ENCODE measurements at regions of chr9 and their contacts with region 1.

Region 1: DNA sequence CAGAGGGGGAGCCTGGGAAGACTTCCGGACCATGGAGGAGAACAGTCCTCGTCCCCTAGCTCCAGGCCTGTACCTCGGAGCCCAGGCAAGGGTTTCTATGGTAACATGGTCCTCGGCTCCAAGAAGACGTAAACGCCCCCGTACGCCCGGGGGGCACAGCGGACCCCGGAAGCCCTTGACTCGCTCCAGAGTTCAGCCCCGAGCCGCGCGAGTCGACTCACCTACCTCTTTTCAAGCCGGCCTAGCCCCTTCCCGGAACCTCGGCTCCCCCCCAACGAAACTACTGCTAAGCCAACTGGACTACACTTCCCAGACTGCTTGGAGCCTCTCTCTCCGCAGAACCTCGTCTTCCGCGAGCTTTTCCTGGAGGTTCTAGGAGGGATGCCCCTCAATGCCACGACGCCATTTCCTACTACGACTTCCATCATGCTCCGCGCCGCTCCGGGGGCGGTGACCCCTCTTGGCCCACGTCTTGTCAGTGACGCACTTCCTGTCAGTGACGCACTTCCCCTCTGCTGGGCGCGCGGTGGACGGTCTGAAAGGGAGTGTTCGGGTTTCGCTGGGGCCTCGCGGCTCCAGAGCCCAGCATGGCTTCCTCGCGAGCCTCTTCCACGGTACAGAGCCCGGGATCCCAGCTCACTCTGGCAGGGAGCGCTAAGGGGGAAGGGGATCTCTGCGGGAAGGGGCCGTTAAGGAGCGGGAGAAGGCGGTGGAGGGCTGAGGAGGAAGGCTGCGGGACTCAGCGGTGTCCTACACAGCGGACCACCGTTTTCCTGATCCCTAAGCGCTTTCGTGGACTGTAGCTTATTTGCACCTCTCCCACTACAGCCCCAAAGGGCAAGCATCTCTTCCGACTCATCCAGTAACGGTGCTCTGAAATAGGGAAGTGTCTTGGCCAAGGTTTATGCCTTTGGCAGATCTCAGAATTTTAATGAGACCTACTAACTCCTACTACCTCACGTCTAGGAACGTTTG is at the starts of genes CDC26 and PRPF4:
- DNase-seq: peak; percentile 99
- ATAC-seq: peak; percentile 91
- H3K4me3 Mint-ChIP-seq: no peak within 1 kb of the TSS
- H3K27ac Mint-ChIP-seq: no peak within 1 kb of the TSS
- H3K4me1 Mint-ChIP-seq: peaks cover 32% of the 10 kb centered on the region
- H3K27me3 Mint-ChIP-seq: no peaks in the 10 kb centered on the region
- CTCF ChIP-seq: no peak
- total RNA-seq, gene CDC26: 28.0 to 30.4 TPM
- total RNA-seq, gene PRPF4: 52.9 to 56.5 TPM

Region 2: GRCh38 chr9:113221003-113221799 is 54.2 kb before region 1 on chr9 and contains the starts of genes FKBP15 and SLC31A1:
- CTCF ChIA-PET with region 1: interaction called, 35 read pairs
- POLR2A ChIA-PET with region 1: interaction called, 20 read pairs
- intact Hi-C with region 1: no loop called
- DNase-seq: peak; percentile 98
- ATAC-seq: peak; percentile 98
- H3K4me3 Mint-ChIP-seq: peak within 1 kb of the TSS; percentile 86
- H3K27ac Mint-ChIP-seq: peak within 1 kb of the TSS; percentile 89
- H3K4me1 Mint-ChIP-seq: peaks cover 45% of the 10 kb centered on the region
- H3K27me3 Mint-ChIP-seq: no peaks in the 10 kb centered on the region
- CTCF ChIP-seq: no peak
- total RNA-seq, gene FKBP15: 32.5 to 33.7 TPM
- total RNA-seq, gene SLC31A1: 18.3 to 19.2 TPM

Region 3: GRCh38 chr9:113340017-113340699 is 64.7 kb after region 1 on chr9 and contains the start of gene WDR31:
- CTCF ChIA-PET with region 1: interaction called, 14 read pairs
- POLR2A ChIA-PET with region 1: interaction called, 4 read pairs
- intact Hi-C with region 1: loop called (anchors 10 kb)
- DNase-seq: peak; percentile 81
- ATAC-seq: peak; percentile 97
- H3K4me3 Mint-ChIP-seq: peak within 1 kb of the TSS; percentile 75
- H3K27ac Mint-ChIP-seq: no peak within 1 kb of the TSS
- H3K4me1 Mint-ChIP-seq: peaks cover 28% of the 10 kb centered on the region
- H3K27me3 Mint-ChIP-seq: no peaks in the 10 kb centered on the region
- CTCF ChIP-seq: no peak
- total RNA-seq, gene WDR31: 1.3 to 1.4 TPM

Region 4: GRCh38 chr9:113401027-113401792 is 125.8 kb after region 1 on chr9 and contains the start of gene ALAD:
- CTCF ChIA-PET with region 1: interaction called, 55 read pairs
- POLR2A ChIA-PET with region 1: interaction called, 5 read pairs
- intact Hi-C with region 1: loop called (anchors 2 kb)
- DNase-seq: peak; percentile 99
- ATAC-seq: peak; percentile 100
- H3K4me3 Mint-ChIP-seq: peak within 1 kb of the TSS; percentile 91
- H3K27ac Mint-ChIP-seq: peak within 1 kb of the TSS; percentile 81
- H3K4me1 Mint-ChIP-seq: peaks cover 12% of the 10 kb centered on the region
- H3K27me3 Mint-ChIP-seq: no peaks in the 10 kb centered on the region
- CTCF ChIP-seq: peak; percentile 99
- total RNA-seq, gene ALAD: 16.2 to 16.3 TPM

Region 5: DNA sequence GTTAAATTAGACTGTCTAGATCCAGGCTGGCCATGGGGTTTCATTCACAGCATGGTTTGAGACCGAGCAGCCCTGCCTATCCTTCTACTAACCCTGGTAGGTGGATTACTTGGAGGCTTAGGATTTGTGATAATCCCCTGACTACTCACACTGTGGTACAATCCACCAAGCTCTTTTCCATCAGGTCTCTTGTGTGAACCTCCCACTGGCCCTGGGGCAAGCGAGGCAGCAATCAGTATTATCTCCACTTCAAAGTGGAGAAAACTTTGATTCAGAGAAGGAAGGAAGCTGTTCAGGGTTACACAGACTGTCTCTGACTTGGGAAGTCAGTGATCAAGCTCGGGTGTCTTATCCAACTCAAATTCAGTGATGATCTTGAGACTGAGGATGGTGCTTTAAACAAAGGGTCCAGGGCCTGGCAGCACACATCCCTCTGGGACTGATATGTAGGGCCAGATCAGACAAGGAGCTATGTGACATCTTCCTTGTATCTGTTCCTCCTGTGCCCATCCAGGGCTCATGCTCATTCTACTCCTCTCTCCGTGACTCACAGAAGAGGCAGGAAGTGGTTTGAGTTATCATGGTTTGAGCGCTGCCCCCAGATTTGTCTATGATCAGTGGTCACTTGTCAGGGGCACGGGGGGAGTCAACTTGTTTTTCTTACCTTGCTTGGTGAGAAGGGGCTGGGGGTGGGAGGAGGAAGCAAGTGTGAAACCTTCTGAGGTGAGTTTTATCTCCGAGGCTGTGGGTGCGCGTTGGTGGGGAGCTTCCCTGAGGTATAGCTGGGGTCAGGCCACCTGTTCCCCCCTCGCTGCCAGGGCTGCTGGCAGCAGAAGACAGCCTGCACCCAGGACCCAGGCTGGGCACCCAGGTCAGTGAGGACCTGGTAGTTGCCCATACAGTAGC is 236.7 kb after region 1 on chr9:
- CTCF ChIA-PET with region 1: interaction called, 6 read pairs
- POLR2A ChIA-PET with region 1: no interaction called
- intact Hi-C with region 1: loop called (anchors 10 kb)
- DNase-seq: peak; percentile 97
- ATAC-seq: peak; percentile 74
- H3K4me3 Mint-ChIP-seq: peak overlapping the region; percentile 55
- H3K27ac Mint-ChIP-seq: peak overlapping the region; percentile 97
- H3K4me1 Mint-ChIP-seq: peaks cover 66% of the 10 kb centered on the region
- H3K27me3 Mint-ChIP-seq: no peaks in the 10 kb centered on the region
- CTCF ChIP-seq: no peak

Region 6: DNA sequence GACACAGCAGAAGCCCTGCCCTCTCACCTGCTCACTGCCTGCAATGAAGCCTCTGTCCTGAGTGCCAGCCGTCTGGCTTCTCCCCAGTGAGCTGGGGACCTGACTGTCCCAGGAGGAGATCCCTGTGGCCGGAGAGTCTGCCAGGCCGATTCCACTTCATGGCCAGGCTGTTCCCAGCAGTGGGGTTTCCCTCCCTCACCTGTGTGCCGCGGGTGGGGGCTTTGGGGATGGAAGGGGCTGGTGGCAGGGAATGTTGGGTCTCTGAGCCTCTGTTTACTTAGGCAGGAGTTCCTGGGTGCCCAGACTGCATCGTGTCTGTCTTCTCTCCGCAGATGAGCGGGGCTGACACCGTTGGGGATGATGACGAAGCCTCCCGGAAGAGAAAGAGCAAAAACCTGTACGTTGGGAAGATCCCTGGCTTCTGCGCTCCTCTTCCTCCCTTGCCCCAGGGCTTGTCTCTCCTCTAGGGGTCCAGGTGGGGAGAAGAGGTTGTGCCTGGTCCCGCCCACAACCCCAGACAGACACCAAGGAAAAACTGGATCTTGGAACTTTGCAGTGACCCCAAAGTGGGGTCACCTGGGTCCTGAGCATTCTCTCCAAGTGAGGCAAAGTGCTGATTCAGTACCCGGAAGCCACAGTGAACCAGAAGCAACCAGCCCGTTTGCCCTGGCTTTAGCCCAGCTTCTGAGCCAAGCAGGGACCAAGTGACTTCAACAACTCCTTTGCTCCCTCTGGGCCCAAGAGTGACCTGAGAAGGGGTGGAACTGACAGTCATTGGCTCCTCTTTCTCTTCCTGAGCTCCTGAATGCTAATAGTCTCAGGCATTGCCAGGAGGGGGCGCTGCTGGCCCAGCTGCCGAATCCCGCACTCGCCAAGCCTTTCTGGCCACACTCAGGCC is 315.8 kb after region 1 on chr9:
- CTCF ChIA-PET with region 1: interaction called, 11 read pairs
- POLR2A ChIA-PET with region 1: no interaction called
- intact Hi-C with region 1: no loop called
- DNase-seq: peak; percentile 86
- ATAC-seq: peak; percentile 77
- H3K4me3 Mint-ChIP-seq: no peak overlapping the region
- H3K27ac Mint-ChIP-seq: peak overlapping the region; percentile 33
- H3K4me1 Mint-ChIP-seq: peaks cover 40% of the 10 kb centered on the region
- H3K27me3 Mint-ChIP-seq: no peaks in the 10 kb centered on the region
- CTCF ChIP-seq: peak; percentile 88